ENCODE measurements at regions of chr19 and their contacts with region 1.

Region 1: GRCh38 chr19:10517760-10518443 is 655 bp upstream of the S1PR5 start:
- DNase-seq: peak in 7 of 10 donors; percentile 45 to 73 (median 56)
- H3K4me3 ChIP-seq: peak overlapping the region; percentile 28 to 83 (median 64)
- H3K27ac ChIP-seq: peak overlapping the region in 58 of 59 donors; percentile 75 to 100 (median 98)
- H3K27me3 ChIP-seq: peaks cover 0 to 70% (median 44%) of the 10 kb centered on the region in 45 donors
- CTCF ChIP-seq: peak in 1 of 56 donors; percentile 4

Region 2: GRCh38 chr19:10502524-10503001 is 15.3 kb before region 1 on chr19:
- intact Hi-C with region 1: loop called in 1 of 2 experiments (anchors 2 kb)
- DNase-seq: peak; percentile 86 to 94 (median 90)
- H3K4me3 ChIP-seq: peak overlapping the region; percentile 71 to 100 (median 95)
- H3K27ac ChIP-seq: peak overlapping the region; percentile 94 to 100 (median 99)
- H3K27me3 ChIP-seq: no peaks in the 10 kb centered on the region
- CTCF ChIP-seq: peak in 28 of 56 donors; percentile 2 to 46 (median 20)